ENCODE measurements at regions of chr6 and their contacts with region 1.

Region 1: GRCh38 chr6:89080542-89081422 is at the start of gene PNRC1:
- DNase-seq: peak; percentile 100
- H3K4me3 ChIP-seq: peak within 1 kb of the TSS; percentile 64 to 100
- H3K27ac ChIP-seq: peak within 1 kb of the TSS; percentile 100
- H3K4me1 ChIP-seq: peaks cover 30% of the 10 kb centered on the region
- H3K27me3 ChIP-seq: no peaks in the 10 kb centered on the region
- CTCF ChIP-seq: peak in 1 of 3 experiments; percentile 13
- POLR2A ChIP-seq: peak; percentile 98 to 100
- total RNA-seq, gene PNRC1: 289 TPM

Region 2: DNA sequence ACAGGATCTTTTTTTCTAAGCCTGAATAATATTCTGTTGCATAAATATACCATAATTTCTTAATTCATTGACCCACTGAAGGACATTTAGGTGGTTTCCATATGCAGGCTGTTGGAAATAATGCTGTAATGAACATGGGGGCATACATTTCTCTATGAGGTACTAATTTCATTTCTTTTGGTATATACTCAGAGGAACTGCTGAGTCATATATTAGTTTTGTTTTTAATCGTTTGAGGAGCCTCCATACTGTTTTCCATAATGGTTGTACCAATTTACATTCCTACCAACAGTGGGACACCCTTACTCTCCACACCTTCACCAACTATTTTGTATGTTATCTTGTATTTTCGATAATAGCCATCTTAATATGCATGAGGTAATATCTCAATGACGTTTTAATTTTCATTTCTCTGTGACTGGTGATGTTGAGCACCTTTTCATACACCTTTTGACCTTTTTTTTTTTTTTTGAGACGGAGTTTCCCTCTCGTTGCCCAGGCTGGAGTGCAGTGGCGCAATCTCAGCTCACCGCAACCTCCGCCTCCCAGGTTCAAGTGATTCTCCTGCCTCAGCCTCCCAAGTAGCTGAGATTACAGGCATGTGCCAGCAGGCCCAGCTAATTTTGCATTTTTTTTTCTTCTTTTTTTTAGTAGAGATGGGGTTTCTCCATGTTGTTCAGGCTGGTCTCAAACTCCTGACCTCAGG is 304.8 kb before region 1 on chr6:
- intact Hi-C with region 1: no loop called
- DNase-seq: no peak
- H3K4me3 ChIP-seq: no peak overlapping the region
- H3K27ac ChIP-seq: no peak overlapping the region
- H3K4me1 ChIP-seq: no peaks in the 10 kb centered on the region
- H3K27me3 ChIP-seq: no peaks in the 10 kb centered on the region
- CTCF ChIP-seq: no peak
- POLR2A ChIP-seq: no peak

Region 3: DNA sequence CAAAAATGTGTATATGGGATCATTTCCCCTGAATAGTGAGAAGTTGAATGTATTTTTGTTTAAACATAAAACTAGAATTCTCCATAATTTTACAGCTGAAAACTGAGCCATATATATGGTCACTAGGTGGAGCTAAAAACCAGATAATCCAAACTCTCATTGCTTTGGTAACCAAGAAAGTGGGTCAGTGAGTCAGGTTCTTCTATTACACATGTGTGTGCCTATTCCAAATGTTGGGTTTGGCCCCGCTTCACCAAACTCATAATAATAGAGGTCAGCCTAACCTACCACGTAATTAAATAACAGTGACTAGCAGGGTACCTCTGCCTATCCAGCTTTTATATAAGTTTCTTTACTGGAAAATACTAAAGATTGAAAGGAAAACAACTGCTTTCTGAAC is 98.1 kb before region 1 on chr6:
- intact Hi-C with region 1: loop called (anchors 10 kb)
- DNase-seq: no peak
- H3K4me3 ChIP-seq: no peak overlapping the region
- H3K27ac ChIP-seq: peak overlapping the region; percentile 46
- H3K4me1 ChIP-seq: peaks cover 11% of the 10 kb centered on the region
- H3K27me3 ChIP-seq: no peaks in the 10 kb centered on the region
- CTCF ChIP-seq: peak in 2 of 3 experiments; percentile 73 to 83
- POLR2A ChIP-seq: no peak

Region 4: GRCh38 chr6:89035252-89036106 is 45.3 kb before region 1 on chr6:
- intact Hi-C with region 1: loop called (anchors 5 kb)
- DNase-seq: peak in 1 of 2 donors; percentile 100
- H3K4me3 ChIP-seq: peak overlapping the region; percentile 6 to 7
- H3K27ac ChIP-seq: peak overlapping the region; percentile 91
- H3K4me1 ChIP-seq: peaks cover 30% of the 10 kb centered on the region
- H3K27me3 ChIP-seq: no peaks in the 10 kb centered on the region
- CTCF ChIP-seq: no peak
- POLR2A ChIP-seq: no peak

Region 5: DNA sequence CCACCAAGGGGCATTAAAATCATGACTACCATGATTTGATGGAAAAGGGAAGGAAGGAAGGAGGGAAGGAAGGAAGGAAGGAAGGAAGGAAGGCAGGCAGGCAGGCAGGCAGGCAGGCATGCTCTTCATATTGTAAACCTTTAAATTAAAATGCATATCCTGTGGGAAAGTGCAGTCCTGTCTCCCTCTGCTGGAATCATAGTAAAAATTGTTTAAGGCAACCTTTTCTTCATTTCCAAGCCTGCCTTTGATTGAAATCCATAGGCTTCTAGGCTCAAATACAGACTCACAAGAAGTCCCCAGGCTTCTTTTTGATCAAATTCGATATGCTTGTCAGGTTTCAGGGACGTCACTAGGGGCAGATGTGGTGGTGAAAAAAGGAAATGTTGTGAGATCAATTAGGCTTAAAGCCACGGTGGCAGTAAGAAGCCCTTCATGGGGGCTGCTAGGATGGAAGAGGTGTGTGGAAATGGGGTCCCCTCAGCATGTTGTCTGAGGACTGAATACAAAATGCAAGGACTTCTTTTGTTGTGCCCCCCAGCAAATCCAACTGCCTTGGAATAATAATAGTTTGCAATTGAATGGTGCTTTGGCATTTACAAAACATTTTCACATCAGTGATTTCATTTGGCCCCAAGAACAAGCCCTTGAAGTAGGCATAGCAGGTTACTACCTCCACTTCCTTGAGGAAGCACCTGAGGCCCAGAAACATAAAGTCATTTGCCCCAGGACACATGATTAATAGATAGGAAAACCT is 162.0 kb after region 1 on chr6:
- intact Hi-C with region 1: no loop called
- DNase-seq: no peak
- H3K4me3 ChIP-seq: no peak overlapping the region
- H3K27ac ChIP-seq: no peak overlapping the region
- H3K4me1 ChIP-seq: no peaks in the 10 kb centered on the region
- H3K27me3 ChIP-seq: no peaks in the 10 kb centered on the region
- CTCF ChIP-seq: peak in 2 of 3 experiments; percentile 48 to 50
- POLR2A ChIP-seq: no peak

Region 6: DNA sequence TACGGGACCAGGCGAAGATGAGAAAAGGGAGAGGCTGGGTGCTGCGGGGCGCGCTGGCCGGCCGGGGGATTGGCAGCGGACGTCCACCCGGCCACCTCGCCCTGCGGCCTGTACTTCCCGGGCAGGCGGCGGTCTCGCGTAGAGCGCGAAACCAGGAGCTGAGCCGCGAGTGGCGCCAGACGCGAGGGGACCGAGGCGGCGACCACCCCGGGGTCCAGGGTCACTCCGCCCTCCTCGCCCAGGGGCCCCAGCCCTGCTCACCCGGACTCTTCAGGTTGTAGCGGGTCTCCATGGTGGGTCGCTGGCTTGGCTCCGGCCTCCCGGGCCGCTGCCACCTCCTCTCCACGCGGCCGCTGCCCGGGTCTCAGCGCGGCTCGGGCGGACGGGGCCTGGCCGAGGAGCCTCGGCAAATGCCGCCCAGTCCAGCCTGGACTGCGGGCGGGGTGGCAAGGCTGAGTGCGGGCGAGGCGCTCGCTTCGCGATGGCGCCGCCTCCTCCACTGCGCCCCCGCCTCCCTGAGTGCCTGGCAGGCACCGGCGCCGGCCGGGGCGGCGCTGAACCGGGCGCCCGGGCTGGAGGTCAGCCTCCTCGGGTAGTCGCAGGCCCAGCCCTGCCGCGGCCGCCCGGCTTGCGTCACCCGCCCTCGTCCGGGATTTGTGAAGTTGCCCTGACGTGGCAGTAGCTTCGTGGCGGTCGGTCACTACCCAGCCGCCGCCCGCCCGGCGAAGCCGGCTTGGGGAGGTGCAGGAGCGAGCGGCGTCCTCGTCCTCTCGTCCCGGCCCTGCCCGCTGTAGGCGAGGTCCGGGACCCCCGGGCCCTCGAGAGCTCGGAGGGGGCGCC is 271.7 kb after region 1 on chr6 and contains the start of gene UBE2J1:
- intact Hi-C with region 1: loop called (anchors 5 kb)
- DNase-seq: peak in 1 of 2 donors; percentile 92
- H3K4me3 ChIP-seq: peak within 1 kb of the TSS; percentile 70 to 87
- H3K27ac ChIP-seq: peak within 1 kb of the TSS; percentile 96
- H3K4me1 ChIP-seq: peaks cover 46% of the 10 kb centered on the region
- H3K27me3 ChIP-seq: no peaks in the 10 kb centered on the region
- CTCF ChIP-seq: no peak
- POLR2A ChIP-seq: peak in 1 of 2 donors; percentile 81
- total RNA-seq, gene UBE2J1: 23.8 TPM